Endothelial cell of umbilical vein (primary cell): ENCODE measurements at regions of chr7 and their contacts with region 1.

Region 1: DNA sequence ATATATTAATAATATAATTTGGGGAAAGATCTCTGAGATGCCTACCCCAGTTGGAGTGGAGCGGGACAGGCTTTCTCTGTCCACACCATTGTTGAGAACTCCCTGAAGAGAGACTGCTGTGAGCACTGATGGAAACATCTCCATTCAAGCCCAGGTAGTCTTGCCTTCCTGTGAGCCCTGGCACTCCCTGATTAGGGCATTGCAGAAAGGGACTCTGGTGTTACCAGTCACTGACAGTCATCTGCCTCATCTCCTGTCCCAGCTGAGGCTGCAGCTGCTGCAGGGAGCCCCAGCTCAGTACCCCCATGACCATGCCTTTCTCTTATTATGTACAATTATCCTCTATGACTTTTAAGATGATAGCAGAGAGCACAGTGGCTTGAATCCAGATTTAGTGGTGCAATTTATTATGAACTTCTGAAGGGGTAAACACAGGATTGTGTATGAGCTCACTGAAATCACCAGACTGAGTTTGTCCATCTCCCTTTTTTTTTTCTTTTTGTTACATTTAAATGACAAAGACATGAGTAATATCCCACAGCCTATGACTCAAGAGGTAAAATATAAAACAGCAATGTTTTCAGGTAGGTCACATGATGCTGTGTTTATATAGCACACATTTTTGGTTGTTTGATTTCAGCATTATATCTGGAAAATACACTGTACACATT is 236.9 kb downstream of the SLC25A13 start:
- DNase-seq: peak; percentile 72
- H3K4me3 ChIP-seq: no peak overlapping the region
- H3K27ac ChIP-seq: peak overlapping the region; percentile 57
- H3K4me1 ChIP-seq: peaks cover 31% of the 10 kb centered on the region
- H3K27me3 ChIP-seq: no peaks in the 10 kb centered on the region
- CTCF ChIP-seq: no peak
- POLR2A ChIP-seq: no peak

Region 2: DNA sequence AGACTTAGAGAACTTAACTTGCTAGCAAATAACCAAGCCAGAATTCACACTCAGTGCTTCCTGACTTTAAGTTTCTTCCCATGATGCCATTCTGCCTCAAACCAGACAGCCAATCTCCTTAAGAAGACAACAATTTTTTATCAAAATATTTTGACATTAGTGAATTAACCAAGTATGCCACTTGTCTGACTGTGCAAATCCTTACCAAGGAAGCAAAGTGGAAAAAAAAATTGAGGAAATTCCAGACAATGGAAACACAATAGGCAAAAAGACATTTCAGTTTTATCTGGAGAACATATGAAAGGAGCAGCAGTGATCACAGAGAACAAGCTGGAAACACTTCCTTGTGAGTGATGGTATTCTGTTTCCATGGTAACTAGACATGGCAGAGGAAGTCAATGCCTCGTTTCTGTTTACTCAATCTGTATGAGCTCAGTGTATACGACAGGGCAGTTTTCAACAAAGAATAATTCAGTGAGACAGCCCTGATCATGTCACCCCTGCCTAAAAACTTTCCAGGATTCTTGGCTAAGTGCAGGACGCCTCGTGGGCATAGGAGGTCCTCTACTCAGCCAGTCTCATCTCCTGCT is 198.4 kb before region 1 on chr7:
- CTCF ChIA-PET with region 1: no interaction called
- POLR2A ChIA-PET with region 1: no interaction called
- dilution Hi-C with region 1: no loop called
- intact Hi-C with region 1: loop called (anchors 1 kb)
- DNase-seq: peak; percentile 96
- H3K4me3 ChIP-seq: peak overlapping the region in 1 of 3 experiments; percentile 7
- H3K27ac ChIP-seq: peak overlapping the region; percentile 73
- H3K4me1 ChIP-seq: peaks cover 17% of the 10 kb centered on the region
- H3K27me3 ChIP-seq: no peaks in the 10 kb centered on the region
- CTCF ChIP-seq: no peak
- POLR2A ChIP-seq: no peak

Region 3: DNA sequence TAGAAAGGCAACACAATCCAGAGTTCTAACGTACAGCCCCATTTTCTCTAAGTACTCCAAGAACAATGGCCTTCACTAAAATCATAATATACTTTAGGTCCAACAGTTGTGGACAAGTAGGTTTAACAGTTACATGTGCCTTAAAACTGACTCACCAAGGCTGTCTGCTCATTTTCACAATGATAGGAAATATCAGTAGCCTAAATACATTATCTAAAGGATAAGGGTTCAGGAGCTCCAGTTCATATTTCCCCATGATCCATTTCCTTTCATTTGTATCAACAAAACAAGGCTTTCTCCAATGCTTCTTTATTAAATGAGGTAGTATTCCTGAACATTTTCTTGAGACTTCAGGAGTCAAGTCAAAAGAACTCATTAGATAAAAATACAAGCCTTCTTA is 72.8 kb after region 1 on chr7:
- CTCF ChIA-PET with region 1: no interaction called
- POLR2A ChIA-PET with region 1: no interaction called
- dilution Hi-C with region 1: no loop called
- intact Hi-C with region 1: loop called (anchors 5 kb)
- DNase-seq: peak; percentile 92
- H3K4me3 ChIP-seq: no peak overlapping the region
- H3K27ac ChIP-seq: peak overlapping the region; percentile 34
- H3K4me1 ChIP-seq: peaks cover 12% of the 10 kb centered on the region
- H3K27me3 ChIP-seq: no peaks in the 10 kb centered on the region
- CTCF ChIP-seq: no peak
- POLR2A ChIP-seq: no peak

Region 4: DNA sequence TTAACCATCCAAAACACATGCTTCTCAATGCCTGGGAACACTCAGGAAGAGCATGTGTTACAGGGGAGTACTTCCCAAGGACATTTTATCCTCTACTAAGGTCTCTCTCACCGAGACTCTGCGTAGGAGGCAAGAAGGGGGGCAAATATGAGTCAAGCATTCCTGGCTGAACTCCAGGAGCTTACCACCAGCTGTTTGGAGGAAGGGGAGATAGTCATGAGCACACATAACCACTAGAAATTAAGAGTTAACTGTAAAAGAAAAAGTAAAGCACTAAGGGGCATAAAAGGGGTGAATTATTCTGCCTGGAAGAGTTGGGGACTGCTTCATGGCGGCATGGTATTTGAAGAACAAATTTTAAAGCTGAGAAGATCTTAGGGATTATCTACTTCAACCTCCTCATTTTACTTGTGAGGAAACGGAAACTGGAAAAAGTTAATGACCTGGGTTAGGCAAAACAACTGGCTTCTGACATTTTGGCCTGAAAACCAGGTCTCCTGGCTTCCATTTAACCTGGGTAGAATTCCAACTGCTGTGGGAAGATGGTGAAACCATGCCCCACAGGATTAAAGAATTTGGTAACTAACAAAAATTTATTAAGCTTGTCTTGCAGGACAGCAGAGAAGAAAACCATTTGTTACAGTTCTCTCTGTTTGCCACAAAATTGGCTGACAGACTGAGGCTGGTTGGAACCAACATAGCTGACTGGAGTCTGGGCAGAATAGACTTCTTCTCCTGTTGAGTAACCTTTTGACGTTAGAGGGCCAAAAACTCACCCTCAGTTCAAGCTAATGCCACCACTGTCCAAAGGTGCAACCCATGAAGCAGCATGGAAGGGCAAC is 151.4 kb after region 1 on chr7:
- CTCF ChIA-PET with region 1: no interaction called
- POLR2A ChIA-PET with region 1: no interaction called
- dilution Hi-C with region 1: no loop called
- intact Hi-C with region 1: loop called (anchors 2 kb)
- DNase-seq: peak; percentile 97
- H3K4me3 ChIP-seq: no peak overlapping the region
- H3K27ac ChIP-seq: peak overlapping the region; percentile 2
- H3K4me1 ChIP-seq: peaks cover 18% of the 10 kb centered on the region
- H3K27me3 ChIP-seq: no peaks in the 10 kb centered on the region
- CTCF ChIP-seq: no peak
- POLR2A ChIP-seq: no peak